ENCODE measurements at regions of chr16 and their contacts with region 1.

Region 1: GRCh38 chr16:6988846-6989245 is 343.8 kb upstream of the RBFOX1 start:
- DNase-seq: peak in 1 of 2 donors; percentile 10
- H3K4me3 ChIP-seq: no peak overlapping the region
- H3K27ac ChIP-seq: no peak overlapping the region
- H3K4me1 ChIP-seq: no peaks in the 10 kb centered on the region
- H3K27me3 ChIP-seq: no peaks in the 10 kb centered on the region
- CTCF ChIP-seq: no peak
- POLR2A ChIP-seq: no peak

Region 2: DNA sequence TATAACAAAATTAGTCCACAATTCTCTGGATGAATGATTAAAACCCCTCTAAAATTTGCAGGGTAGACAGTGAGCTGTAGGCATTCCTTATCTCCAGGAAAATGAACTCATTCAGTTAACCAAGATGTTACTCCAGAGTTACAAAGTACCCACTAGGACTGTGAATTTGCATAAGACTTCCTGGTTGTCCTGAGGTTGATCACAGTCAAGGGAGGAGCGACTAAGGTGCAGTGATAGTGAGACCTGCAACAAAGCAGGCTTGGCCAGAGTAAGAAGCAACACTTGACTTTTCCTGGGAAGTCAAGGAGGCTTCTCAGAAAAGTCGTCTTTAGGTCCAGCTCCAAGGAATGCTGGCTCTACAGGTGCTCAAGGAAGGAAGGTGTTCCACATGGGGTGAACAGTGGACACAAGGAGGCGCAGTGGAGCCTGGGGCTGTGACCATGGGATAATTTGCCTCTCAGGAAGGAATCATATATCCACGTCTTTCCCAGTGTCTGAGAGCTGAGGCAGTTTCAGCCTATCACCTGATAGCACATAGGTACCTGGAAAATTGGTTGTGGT is 1070.2 kb before region 1 on chr16:
- intact Hi-C with region 1: loop called (anchors 5 kb)
- DNase-seq: no peak
- H3K4me3 ChIP-seq: no peak overlapping the region
- H3K27ac ChIP-seq: no peak overlapping the region
- H3K4me1 ChIP-seq: no peaks in the 10 kb centered on the region
- H3K27me3 ChIP-seq: no peaks in the 10 kb centered on the region
- CTCF ChIP-seq: no peak
- POLR2A ChIP-seq: no peak

Region 3: DNA sequence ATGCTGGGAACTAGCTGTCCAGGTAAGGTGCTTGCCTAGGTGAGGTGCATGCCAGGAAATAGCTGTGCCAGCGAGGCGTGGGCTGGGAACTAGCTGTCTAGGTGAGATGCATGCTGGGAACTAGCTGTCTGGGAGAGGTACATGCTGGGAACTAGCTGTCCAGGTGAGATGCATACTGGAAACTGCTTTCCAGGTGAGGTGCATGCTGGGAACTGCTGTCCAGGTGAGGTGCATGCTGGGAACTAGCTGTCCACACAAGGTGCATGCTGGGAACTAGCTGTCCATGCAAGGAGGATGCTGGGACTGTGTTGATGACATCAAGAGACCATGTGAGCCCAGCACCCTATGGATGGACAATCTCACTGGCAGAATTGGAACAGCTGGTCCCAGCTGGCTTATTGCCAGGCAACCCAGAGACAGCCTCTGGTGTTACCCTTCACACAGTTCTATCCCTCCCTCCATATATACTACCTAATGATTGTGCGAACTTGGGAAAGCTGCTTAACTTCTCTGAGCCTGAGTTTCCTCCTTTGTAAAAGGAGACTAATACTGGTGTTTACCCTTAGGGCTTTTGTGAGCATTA is 136.1 kb before region 1 on chr16:
- intact Hi-C with region 1: no loop called
- DNase-seq: no peak
- H3K4me3 ChIP-seq: no peak overlapping the region
- H3K27ac ChIP-seq: no peak overlapping the region
- H3K4me1 ChIP-seq: no peaks in the 10 kb centered on the region
- H3K27me3 ChIP-seq: no peaks in the 10 kb centered on the region
- CTCF ChIP-seq: no peak
- POLR2A ChIP-seq: no peak

Region 4: GRCh38 chr16:8505327-8505991 is 1516.6 kb after region 1 on chr16:
- intact Hi-C with region 1: no loop called
- DNase-seq: no peak
- H3K4me3 ChIP-seq: no peak overlapping the region
- H3K27ac ChIP-seq: no peak overlapping the region
- H3K4me1 ChIP-seq: no peaks in the 10 kb centered on the region
- H3K27me3 ChIP-seq: no peaks in the 10 kb centered on the region
- CTCF ChIP-seq: no peak
- POLR2A ChIP-seq: no peak

Measured in vagina (tissue), 2 donors.